ENCODE measurements at regions of chr9 and their contacts with region 1.

Region 1: GRCh38 chr9:70495514-70495913 is 81.1 kb upstream of the KLF9 start:
- DNase-seq: peak in 1 of 14 experiments; percentile 8
- ATAC-seq: no peak
- H3K4me3 ChIP-seq: no peak overlapping the region
- H3K4me3 Mint-ChIP-seq: no peak overlapping the region
- H3K27ac ChIP-seq: no peak overlapping the region
- H3K27ac Mint-ChIP-seq: no peak overlapping the region
- H3K4me1 ChIP-seq: peaks cover 7% of the 10 kb centered on the region
- H3K4me1 Mint-ChIP-seq: peaks cover 24% of the 10 kb centered on the region
- H3K27me3 ChIP-seq: no peaks in the 10 kb centered on the region
- H3K27me3 Mint-ChIP-seq: no peaks in the 10 kb centered on the region
- CTCF ChIP-seq: no peak

Region 2: DNA sequence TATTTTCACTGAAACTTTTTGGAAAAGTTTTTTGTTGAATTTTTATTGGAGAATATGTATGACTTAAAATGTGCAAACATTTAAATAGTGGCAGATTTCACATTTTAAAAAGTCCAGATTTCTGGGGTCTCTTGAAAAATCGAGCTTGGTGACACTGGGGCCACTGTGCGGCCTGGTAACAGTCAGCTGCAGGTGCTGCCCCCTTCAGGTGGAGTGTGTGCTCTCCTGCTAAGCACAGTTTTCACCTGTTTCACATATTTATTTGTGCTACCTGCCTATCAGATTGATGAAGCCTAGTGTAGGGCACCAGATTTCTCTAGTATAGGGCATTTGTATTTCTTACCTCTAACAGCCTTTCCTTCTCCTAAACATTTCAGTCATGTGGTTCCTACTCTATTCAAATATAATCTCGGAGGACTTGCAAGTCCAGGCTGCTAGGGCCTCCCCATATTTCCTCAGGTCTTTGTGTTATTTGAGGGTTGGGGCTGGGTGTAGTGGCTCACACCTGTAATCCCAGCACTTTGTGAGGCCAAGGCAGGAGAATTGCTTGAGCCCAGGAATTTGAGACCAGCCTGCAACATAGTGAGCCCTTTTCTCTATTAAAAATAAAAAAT is 14.8 kb after region 1 on chr9:
- CTCF ChIA-PET with region 1: interaction called, 3 read pairs
- POLR2A ChIA-PET with region 1: no interaction called
- intact Hi-C with region 1: loop called in 1 of 2 experiments (anchors 1 kb)
- DNase-seq: peak in 5 of 14 experiments; percentile 5 to 32 (median 21)
- ATAC-seq: no peak
- H3K4me3 ChIP-seq: no peak overlapping the region
- H3K4me3 Mint-ChIP-seq: no peak overlapping the region
- H3K27ac ChIP-seq: no peak overlapping the region
- H3K27ac Mint-ChIP-seq: no peak overlapping the region
- H3K4me1 ChIP-seq: no peaks in the 10 kb centered on the region
- H3K4me1 Mint-ChIP-seq: peaks cover 6% of the 10 kb centered on the region
- H3K27me3 ChIP-seq: peaks cover 0 to 2% of the 10 kb centered on the region in 2 experiments
- H3K27me3 Mint-ChIP-seq: no peaks in the 10 kb centered on the region
- CTCF ChIP-seq: no peak

Region 3: DNA sequence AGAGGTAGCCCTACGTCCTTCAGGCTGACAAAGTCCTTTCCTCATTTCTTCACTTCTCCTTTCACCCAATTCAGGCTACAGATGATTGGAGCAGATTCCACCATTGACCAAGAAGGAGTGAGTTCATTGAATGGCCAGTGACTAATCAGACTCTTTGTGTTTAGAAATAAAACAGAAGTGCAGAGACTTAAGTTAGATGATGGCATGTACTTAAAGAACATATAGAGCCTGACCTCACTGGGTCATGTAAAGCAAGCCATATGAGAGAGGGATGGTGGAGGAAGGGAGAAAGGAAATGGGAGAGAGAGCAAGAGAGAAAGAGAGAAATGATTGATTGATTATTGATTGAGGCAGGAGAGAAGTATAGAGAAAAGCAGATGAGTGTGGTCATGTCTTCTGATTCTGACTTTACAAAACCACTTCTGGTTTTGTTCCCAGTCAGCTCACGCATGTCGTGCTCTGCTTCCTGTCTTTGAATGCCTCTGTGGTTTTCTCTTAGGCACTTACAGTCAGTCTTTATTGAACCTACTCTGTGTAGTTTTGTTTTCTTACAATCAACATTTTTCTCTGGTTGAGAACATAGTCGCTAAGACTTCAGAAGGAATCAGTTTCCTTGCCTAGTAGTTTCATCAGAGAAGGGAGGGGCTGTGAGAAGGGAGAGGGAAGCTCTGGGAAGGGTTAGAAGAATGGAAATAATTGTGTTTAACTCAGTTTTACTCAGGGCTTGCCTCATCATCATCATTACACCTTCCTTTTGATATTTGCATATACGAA is 68.1 kb after region 1 on chr9:
- CTCF ChIA-PET with region 1: no interaction called
- POLR2A ChIA-PET with region 1: no interaction called
- intact Hi-C with region 1: loop called in 1 of 2 experiments (anchors 5 kb)
- DNase-seq: peak; percentile 7 to 83 (median 37)
- ATAC-seq: peak; percentile 93
- H3K4me3 ChIP-seq: peak overlapping the region; percentile 23
- H3K4me3 Mint-ChIP-seq: peak overlapping the region; percentile 67
- H3K27ac ChIP-seq: peak overlapping the region; percentile 57 to 72
- H3K27ac Mint-ChIP-seq: peak overlapping the region; percentile 86
- H3K4me1 ChIP-seq: peaks cover 30% of the 10 kb centered on the region
- H3K4me1 Mint-ChIP-seq: peaks cover 52% of the 10 kb centered on the region
- H3K27me3 ChIP-seq: no peaks in the 10 kb centered on the region
- H3K27me3 Mint-ChIP-seq: no peaks in the 10 kb centered on the region
- CTCF ChIP-seq: no peak

Region 4: GRCh38 chr9:70656281-70656680 is 160.8 kb after region 1 on chr9:
- CTCF ChIA-PET with region 1: no interaction called
- POLR2A ChIA-PET with region 1: no interaction called
- intact Hi-C with region 1: no loop called
- DNase-seq: no peak
- ATAC-seq: no peak
- H3K4me3 ChIP-seq: no peak overlapping the region
- H3K4me3 Mint-ChIP-seq: no peak overlapping the region
- H3K27ac ChIP-seq: no peak overlapping the region
- H3K27ac Mint-ChIP-seq: no peak overlapping the region
- H3K4me1 ChIP-seq: no peaks in the 10 kb centered on the region
- H3K4me1 Mint-ChIP-seq: no peaks in the 10 kb centered on the region
- H3K27me3 ChIP-seq: peaks cover 0 to 3% of the 10 kb centered on the region in 2 experiments
- H3K27me3 Mint-ChIP-seq: peaks cover 20% of the 10 kb centered on the region
- CTCF ChIP-seq: no peak

Measured in CD4-positive, alpha-beta T cell (primary cell).